Mammary epithelial cell (primary cell): ENCODE measurements at regions of chr2 and their contacts with region 1.

Region 1: GRCh38 chr2:41510108-41510507 is 537.7 kb upstream of the PKDCC start:
- DNase-seq: no peak
- H3K4me3 ChIP-seq: no peak overlapping the region
- H3K27ac ChIP-seq: no peak overlapping the region
- H3K4me1 ChIP-seq: no peaks in the 10 kb centered on the region
- H3K27me3 ChIP-seq: no peaks in the 10 kb centered on the region
- CTCF ChIP-seq: no peak

Region 2: DNA sequence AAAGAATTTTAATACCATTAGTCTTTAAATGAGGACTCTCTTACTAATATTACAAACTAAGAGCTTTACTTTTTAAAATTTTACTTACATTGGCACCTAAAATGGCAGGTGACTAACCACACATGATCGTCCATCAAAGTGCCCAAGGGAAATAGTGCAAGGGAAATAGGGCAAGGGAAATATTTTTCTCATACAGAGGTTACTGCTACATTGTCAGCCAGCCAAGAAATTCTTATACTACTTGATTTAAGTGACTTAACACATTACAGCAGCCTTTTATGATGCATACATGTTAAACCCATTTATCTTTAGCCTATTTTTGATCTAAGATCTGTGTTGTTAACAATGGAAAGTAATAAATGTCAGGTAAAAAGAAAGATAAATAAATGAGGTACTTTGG is 49.4 kb before region 1 on chr2:
- CTCF ChIA-PET with region 1: no interaction called
- dilution Hi-C with region 1: no loop called
- in situ Hi-C with region 1: no loop called
- intact Hi-C with region 1: no loop called
- DNase-seq: no peak
- H3K4me3 ChIP-seq: no peak overlapping the region
- H3K27ac ChIP-seq: no peak overlapping the region
- H3K4me1 ChIP-seq: no peaks in the 10 kb centered on the region
- H3K27me3 ChIP-seq: no peaks in the 10 kb centered on the region
- CTCF ChIP-seq: no peak

Region 3: DNA sequence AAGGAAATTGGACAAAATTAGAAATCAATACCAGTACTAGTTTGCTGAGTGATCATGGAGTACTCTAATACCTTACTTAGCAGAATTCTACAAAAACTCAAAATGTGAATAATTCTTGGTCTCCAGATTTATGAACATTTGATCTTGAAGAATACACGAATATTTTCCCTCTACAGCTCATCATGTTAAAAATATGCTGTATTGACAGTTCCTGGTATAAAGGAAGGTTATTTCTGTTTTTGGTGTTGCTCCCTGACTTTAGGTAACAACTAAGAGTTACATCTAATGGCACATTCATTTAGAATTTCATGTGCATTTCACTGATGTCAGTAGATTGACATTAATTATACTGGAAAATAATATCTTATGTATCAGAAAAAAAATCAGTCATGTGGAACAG is 58.5 kb after region 1 on chr2:
- CTCF ChIA-PET with region 1: no interaction called
- dilution Hi-C with region 1: loop called (anchors 5 kb)
- in situ Hi-C with region 1: no loop called
- intact Hi-C with region 1: no loop called
- DNase-seq: no peak
- H3K4me3 ChIP-seq: no peak overlapping the region
- H3K27ac ChIP-seq: no peak overlapping the region
- H3K4me1 ChIP-seq: no peaks in the 10 kb centered on the region
- H3K27me3 ChIP-seq: no peaks in the 10 kb centered on the region
- CTCF ChIP-seq: no peak

Region 4: DNA sequence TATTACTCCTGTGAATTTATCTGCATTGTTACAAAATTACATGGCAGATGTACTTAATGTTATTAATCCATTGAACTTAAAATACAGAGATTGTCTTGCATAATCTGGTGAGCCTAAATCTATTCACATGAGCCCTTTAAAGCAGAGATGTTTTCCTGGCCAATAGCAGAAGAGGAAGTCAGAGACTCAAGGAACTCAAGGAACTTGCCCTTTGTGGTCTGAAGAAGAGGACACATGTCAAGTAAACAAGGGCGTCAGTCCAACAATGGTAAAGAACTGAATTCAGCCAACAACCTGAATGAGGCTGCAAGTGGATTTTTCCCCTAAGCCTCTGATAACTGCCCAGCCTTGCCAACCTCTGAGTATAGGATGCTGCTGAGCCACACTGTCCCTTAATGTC is 181.5 kb after region 1 on chr2:
- CTCF ChIA-PET with region 1: no interaction called
- dilution Hi-C with region 1: no loop called
- in situ Hi-C with region 1: no loop called
- intact Hi-C with region 1: no loop called
- DNase-seq: no peak
- H3K4me3 ChIP-seq: no peak overlapping the region
- H3K27ac ChIP-seq: no peak overlapping the region
- H3K4me1 ChIP-seq: no peaks in the 10 kb centered on the region
- H3K27me3 ChIP-seq: peaks cover 3% of the 10 kb centered on the region
- CTCF ChIP-seq: no peak